ENCODE measurements at regions of chr11 and their contacts with region 1.

Region 1: DNA sequence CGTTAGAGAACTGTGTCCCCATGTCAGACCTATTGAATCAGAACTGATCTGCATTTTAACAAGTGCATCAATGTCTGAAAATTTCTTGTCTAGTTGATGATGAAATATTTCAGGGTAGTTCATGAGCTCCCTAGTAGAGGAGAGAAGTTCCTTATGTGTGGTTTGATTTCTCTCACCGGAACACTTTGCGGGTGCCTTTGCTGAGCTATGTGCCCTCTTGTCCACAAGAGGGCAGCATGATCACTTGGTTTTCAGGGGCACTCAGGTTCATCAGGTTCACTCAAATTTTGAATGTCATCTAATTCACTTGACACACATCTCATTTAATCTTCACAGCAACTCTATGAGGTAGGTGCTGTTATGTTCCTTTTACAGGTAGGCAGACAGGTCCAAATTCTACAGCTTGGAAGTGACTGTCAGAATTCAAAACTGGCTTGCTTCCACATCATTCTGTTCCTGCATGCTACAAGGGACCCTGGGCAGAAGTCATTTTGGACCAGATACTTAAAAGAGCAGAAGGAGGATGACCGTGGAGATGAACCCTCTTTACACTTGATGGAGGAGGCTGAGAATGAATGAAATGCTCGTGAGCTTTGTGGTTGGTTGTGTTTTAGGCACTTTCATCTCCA is 55.6 kb downstream of the P4HA3 start:
- DNase-seq: peak in 1 of 2 donors; percentile 28
- ATAC-seq: peak; percentile 45 to 78 (median 70)
- H3K4me3 ChIP-seq: no peak overlapping the region
- H3K27ac ChIP-seq: no peak overlapping the region
- H3K4me1 ChIP-seq: peaks cover 23% of the 10 kb centered on the region
- H3K27me3 ChIP-seq: no peaks in the 10 kb centered on the region
- CTCF ChIP-seq: peak; percentile 93

Region 2: DNA sequence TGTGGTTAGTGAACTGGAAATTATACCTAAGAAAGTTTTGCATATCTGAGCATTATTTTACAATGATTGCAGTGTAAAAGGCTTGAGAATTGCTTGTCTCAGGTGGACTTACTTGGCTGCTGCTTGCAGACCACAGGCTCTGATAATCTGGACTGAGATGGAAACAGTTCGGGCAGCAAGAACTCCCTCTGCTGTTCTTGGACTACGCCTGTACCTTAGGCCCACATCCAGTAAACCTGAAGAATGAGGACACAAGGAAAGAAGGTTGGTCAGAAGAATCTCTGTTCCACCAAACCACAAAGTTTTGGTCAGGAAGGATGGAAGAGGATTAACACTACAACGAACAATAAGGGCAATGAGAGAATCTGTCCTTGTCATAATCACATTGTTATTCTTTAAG is 165.2 kb before region 1 on chr11:
- intact Hi-C with region 1: no loop called
- DNase-seq: no peak
- ATAC-seq: peak; percentile 61 to 86 (median 70)
- H3K4me3 ChIP-seq: no peak overlapping the region
- H3K27ac ChIP-seq: no peak overlapping the region
- H3K4me1 ChIP-seq: no peaks in the 10 kb centered on the region
- H3K27me3 ChIP-seq: no peaks in the 10 kb centered on the region
- CTCF ChIP-seq: peak; percentile 46

Region 3: GRCh38 chr11:74311352-74311926 is 55.6 kb after region 1 on chr11 and contains the start of gene P4HA3:
- intact Hi-C with region 1: loop called in 1 of 2 experiments (anchors 5 kb)
- DNase-seq: peak; percentile 73 to 84
- ATAC-seq: peak; percentile 95 to 99 (median 98)
- H3K4me3 ChIP-seq: peak within 1 kb of the TSS; percentile 76
- H3K27ac ChIP-seq: no peak within 1 kb of the TSS
- H3K4me1 ChIP-seq: no peaks in the 10 kb centered on the region
- H3K27me3 ChIP-seq: no peaks in the 10 kb centered on the region
- CTCF ChIP-seq: no peak
- total RNA-seq, gene P4HA3: 0.21 to 0.28 (median 0.22) TPM in 3 of 4 donors, not detected in the other

Region 4: GRCh38 chr11:74321487-74322188 is 65.8 kb after region 1 on chr11:
- intact Hi-C with region 1: loop called in 1 of 2 experiments (anchors 5 kb)
- DNase-seq: no peak
- ATAC-seq: no peak
- H3K4me3 ChIP-seq: no peak overlapping the region
- H3K27ac ChIP-seq: peak overlapping the region; percentile 61
- H3K4me1 ChIP-seq: peaks cover 51% of the 10 kb centered on the region
- H3K27me3 ChIP-seq: no peaks in the 10 kb centered on the region
- CTCF ChIP-seq: peak; percentile 44

Region 5: GRCh38 chr11:74398244-74399159 is 142.6 kb after region 1 on chr11 and contains the start of gene PGM2L1:
- intact Hi-C with region 1: loop called in 1 of 2 experiments (anchors 5 kb)
- DNase-seq: peak; percentile 93 to 95
- ATAC-seq: peak; percentile 97 to 98 (median 98)
- H3K4me3 ChIP-seq: peak within 1 kb of the TSS; percentile 93
- H3K27ac ChIP-seq: peak within 1 kb of the TSS; percentile 89
- H3K4me1 ChIP-seq: peaks cover 5% of the 10 kb centered on the region
- H3K27me3 ChIP-seq: no peaks in the 10 kb centered on the region
- CTCF ChIP-seq: no peak
- total RNA-seq, gene PGM2L1: 9.1 to 10.9 (median 10.2) TPM

Region 6: DNA sequence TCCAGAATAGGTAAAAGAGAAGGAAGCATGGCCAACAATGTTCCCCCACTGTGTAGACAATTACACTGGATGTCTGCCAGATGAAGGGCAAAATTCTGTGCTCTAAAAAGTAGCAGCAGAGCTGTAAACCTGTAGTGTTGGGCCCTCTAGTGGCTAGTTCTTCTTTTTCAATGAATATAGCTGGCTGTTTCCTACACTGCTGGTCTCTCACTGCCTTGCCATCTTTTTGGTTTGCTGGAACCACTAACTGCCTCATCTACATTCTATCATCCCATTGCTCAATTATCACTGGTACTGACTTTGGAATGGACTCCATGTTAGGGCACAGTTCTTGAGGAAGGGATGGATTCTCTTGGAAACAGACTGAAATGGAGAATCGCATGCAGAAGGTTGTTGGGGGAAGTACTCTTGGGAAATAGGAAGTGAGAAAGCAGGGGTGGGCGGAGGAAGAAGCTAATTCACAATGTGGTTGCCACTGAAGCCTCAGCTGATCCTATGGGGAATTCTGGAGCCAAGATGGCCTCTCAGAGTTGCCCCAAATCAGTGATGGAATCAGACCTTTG is 193.6 kb after region 1 on chr11:
- intact Hi-C with region 1: loop called (anchors 2 kb)
- DNase-seq: no peak
- ATAC-seq: peak; percentile 69 to 79 (median 71)
- H3K4me3 ChIP-seq: no peak overlapping the region
- H3K27ac ChIP-seq: no peak overlapping the region
- H3K4me1 ChIP-seq: peaks cover 4% of the 10 kb centered on the region
- H3K27me3 ChIP-seq: no peaks in the 10 kb centered on the region
- CTCF ChIP-seq: peak; percentile 72

Region 7: DNA sequence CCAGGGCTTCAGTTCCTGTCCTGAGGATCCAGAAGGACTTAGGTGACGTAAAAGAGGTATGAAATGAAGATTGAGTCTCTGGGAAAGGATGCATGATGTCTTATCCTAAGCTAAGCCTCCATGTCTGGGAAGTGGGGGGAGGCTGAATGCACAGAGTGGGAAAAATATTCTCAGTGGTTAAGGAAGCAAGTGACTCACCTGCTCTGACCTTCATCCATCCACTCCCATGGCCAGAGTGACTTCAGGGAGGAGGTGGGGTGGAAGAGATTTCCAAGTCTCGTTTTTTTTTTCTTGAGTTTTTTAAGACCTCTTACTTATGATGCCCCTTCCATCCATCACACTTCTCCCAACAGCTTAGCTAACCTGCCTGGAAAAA is 304.1 kb after region 1 on chr11:
- intact Hi-C with region 1: loop called in 1 of 2 experiments (anchors 10 kb)
- DNase-seq: no peak
- ATAC-seq: no peak
- H3K4me3 ChIP-seq: no peak overlapping the region
- H3K27ac ChIP-seq: no peak overlapping the region
- H3K4me1 ChIP-seq: no peaks in the 10 kb centered on the region
- H3K27me3 ChIP-seq: no peaks in the 10 kb centered on the region
- CTCF ChIP-seq: no peak

Region 8: DNA sequence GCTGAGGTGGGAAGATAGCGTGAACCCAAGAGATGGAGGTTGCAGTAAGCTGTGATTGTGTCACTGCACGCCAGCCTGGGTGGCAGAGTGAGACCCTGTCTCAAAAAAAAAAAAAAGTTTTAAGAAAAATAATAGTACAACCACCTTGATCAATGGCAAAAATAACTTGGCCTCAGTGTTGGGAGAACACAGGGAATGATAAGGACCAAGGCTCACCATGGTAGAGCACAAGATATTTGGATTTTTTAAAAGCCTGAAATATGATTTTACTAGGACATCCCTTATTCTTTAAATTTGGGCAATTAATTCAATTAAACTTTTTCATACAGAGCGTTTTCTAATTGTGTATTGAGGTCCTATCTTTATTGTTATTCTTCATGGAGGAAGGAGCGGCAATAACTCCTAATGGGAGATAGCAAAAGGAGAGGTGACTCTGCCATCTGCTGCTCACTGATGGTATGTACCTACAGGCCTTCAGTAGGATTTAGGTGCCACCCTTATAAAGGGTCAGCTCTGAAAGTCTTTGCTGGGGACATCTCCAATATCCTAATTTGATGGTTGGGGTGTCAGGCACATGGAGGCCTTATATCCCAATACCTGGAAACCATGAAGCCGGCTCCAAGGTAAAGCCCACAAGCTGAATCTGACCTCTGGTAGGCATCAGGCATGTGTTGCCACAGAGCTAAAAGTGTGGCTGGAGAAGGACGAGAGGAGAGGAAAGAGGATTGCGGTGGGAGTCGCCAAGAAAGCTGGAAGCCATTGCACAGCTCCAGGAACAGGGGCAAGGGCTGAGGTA is 314.6 kb after region 1 on chr11:
- intact Hi-C with region 1: loop called (anchors 5 to 10 kb)
- DNase-seq: no peak
- ATAC-seq: peak; percentile 54 to 80 (median 69)
- H3K4me3 ChIP-seq: no peak overlapping the region
- H3K27ac ChIP-seq: no peak overlapping the region
- H3K4me1 ChIP-seq: no peaks in the 10 kb centered on the region
- H3K27me3 ChIP-seq: no peaks in the 10 kb centered on the region
- CTCF ChIP-seq: peak; percentile 66